Right ventricle myocardium superior (tissue), 1 donor: ENCODE measurements at regions of chr4 and their contacts with region 1.

Region 1: GRCh38 chr4:34771632-34772031 is 1472.7 kb downstream of the ARAP2 start:
- DNase-seq: no peak
- ATAC-seq: no peak

Region 2: GRCh38 chr4:34826660-34827059 is 55.0 kb after region 1 on chr4:
- intact Hi-C with region 1: loop called (anchors 5 kb)
- DNase-seq: no peak
- ATAC-seq: no peak